ENCODE measurements at regions of chr9 and their contacts with region 1.

Region 1: DNA sequence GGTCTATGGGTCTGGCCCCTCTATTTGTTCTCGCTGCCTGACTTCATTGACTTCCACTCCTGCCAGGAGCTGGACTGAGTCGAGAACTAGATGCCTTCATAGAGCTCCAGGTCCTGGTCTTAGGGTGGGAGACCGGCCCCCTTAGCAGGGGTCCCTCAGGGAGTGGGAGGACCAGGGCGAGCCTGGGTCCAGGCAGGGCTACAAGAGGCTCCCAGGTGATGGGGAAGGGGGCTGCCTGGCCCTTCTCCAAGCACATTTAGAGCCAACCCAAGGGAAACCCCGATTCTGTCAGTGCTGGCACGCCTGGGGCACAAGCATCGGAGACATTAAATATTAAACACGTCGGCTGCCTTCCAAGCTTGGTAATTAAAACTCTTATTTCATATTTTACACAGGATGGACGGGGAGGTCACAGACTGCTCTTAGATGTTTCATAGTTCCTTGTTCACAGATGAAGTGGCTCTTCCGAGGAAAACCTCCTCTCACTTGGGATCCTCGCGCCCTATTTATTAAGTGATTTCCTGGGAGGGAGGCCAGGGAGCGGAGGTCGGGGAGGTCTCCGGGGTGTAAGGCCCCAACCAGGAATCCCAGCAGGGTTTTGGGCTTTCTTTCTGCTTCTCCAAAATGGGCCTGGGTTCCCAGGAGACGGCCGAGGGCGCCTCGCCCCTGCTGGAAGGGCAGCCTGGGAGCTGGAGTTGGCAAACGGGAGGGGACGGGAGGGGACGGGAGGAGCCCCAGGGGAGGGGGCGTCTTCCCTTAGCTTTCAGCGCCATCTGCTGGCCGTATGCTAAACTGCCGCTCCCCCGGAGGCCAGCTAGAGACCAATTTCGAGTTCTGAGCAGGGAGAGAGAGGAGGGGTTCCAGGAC is 23.4 kb upstream of the ZBTB43 start:
- DNase-seq: no peak
- H3K4me3 ChIP-seq: peak overlapping the region; percentile 12
- CTCF ChIP-seq: peak; percentile 89

Region 2: DNA sequence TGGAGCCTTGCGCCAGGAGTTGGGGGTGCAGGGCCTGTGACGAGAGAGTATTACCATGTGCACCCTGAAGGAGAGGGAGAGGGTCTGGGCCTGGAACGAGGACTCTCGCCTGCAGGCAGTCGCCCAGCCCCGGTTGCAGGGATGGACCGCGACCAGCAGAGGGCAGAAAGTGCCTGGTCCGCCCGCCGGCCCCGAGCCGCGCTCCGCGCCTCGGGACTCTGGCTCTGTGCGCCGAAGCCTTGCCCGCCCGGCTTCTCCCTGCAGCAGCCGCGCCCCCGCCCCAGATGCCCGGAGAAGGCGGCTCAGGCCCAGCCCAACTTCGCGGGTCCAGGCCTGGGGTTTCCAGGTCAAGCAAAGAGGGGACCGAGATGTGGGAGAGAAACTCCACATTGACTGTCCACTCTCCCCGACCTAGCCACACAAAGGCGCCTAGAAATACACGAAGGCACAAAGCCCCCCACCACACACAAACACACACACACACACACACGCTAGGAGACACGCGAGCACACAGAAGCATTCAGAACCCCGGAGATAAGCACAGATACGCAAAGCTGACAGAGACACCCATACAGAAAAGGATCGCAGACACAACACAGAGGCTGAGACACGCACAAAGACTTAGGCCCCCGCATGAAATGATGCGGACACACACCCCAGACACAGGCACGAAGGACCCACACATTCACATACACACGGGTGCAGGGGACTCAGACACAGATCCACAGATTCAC is 169.7 kb before region 1 on chr9:
- CTCF ChIA-PET with region 1: interaction called, 35 read pairs
- POLR2A ChIA-PET with region 1: no interaction called
- DNase-seq: no peak
- H3K4me3 ChIP-seq: no peak overlapping the region
- CTCF ChIP-seq: peak; percentile 89

Region 3: DNA sequence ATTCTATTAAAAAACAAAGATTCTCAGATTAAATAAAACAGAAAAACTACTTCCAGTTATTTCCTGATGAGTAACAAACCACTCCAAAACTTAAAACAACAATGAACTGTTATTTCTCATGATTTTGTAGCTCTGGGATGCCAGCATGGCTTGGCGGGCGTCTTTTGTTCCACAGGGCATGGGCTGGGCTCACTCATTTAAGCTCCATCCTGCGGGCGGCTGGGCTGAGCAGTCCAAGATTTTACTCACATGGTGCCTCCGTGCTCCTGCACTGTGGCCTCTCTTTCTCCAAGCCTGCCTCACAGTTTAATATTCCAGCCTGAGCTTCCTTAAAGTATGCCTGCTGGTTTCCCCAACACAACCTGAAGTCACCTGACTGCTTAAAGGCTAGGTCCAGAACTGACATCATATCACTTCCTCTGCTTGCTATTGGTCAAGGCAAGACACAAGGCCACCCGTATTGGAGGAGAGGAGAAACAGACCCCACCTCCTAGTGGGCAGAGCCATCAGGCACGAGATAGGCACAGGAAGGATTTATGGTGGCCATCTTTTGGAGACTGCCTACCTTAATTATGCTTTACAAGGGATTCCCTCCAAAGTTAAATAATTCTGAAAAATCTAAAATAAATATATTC is 18.2 kb before region 1 on chr9:
- CTCF ChIA-PET with region 1: interaction called, 35 read pairs
- POLR2A ChIA-PET with region 1: no interaction called
- DNase-seq: no peak
- H3K4me3 ChIP-seq: no peak overlapping the region
- CTCF ChIP-seq: no peak

Region 4: GRCh38 chr9:126791406-126792151 is 10.2 kb after region 1 on chr9:
- CTCF ChIA-PET with region 1: interaction called, 53 read pairs
- POLR2A ChIA-PET with region 1: no interaction called
- DNase-seq: peak; percentile 57
- H3K4me3 ChIP-seq: no peak overlapping the region
- CTCF ChIP-seq: no peak

Region 5: GRCh38 chr9:126809068-126809467 is 27.6 kb after region 1 on chr9:
- CTCF ChIA-PET with region 1: interaction called, 12 read pairs
- POLR2A ChIA-PET with region 1: no interaction called
- DNase-seq: no peak
- H3K4me3 ChIP-seq: no peak overlapping the region
- CTCF ChIP-seq: no peak

Region 6: GRCh38 chr9:126833710-126834345 is 52.4 kb after region 1 on chr9:
- CTCF ChIA-PET with region 1: no interaction called
- POLR2A ChIA-PET with region 1: no interaction called
- DNase-seq: no peak
- H3K4me3 ChIP-seq: no peak overlapping the region
- CTCF ChIP-seq: no peak